ENCODE measurements at regions of chr3 and their contacts with region 1.

Region 1: GRCh38 chr3:29430558-29430971 is 149.7 kb downstream of the RBMS3 start:
- DNase-seq: no peak
- H3K4me3 ChIP-seq: no peak overlapping the region
- H3K27ac ChIP-seq: peak overlapping the region in 1 of 2 donors; percentile 46
- H3K4me1 ChIP-seq: peaks cover 0 to 4% of the 10 kb centered on the region in 2 donors
- H3K27me3 ChIP-seq: no peaks in the 10 kb centered on the region
- CTCF ChIP-seq: no peak
- POLR2A ChIP-seq: no peak

Region 2: DNA sequence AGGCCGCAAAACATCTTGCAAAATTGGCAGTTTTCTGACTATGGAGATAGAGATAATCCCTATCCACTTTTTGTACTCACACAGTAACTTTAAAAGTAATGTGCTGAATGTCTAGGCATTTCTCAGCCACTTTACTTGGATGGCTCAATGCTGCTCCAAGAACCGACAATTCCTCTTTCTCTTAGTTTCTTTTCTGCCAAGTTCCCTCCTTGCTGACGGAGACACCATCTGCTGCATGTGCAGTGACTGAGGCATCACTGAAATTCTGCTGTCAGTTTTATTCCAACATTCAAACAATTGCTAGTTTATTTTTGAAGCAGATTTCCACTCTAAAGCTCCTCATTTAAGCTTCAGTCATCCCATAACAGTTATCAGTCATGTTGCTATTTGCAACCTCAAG is 265.7 kb before region 1 on chr3:
- intact Hi-C with region 1: loop called (anchors 5 kb)
- DNase-seq: no peak
- H3K4me3 ChIP-seq: no peak overlapping the region
- H3K27ac ChIP-seq: no peak overlapping the region
- H3K4me1 ChIP-seq: no peaks in the 10 kb centered on the region
- H3K27me3 ChIP-seq: no peaks in the 10 kb centered on the region
- CTCF ChIP-seq: no peak
- POLR2A ChIP-seq: no peak

Region 3: GRCh38 chr3:29346828-29347227 is 83.7 kb before region 1 on chr3:
- intact Hi-C with region 1: no loop called
- DNase-seq: no peak
- H3K4me3 ChIP-seq: no peak overlapping the region
- H3K27ac ChIP-seq: no peak overlapping the region
- H3K4me1 ChIP-seq: no peaks in the 10 kb centered on the region
- H3K27me3 ChIP-seq: no peaks in the 10 kb centered on the region
- CTCF ChIP-seq: no peak
- POLR2A ChIP-seq: no peak